ENCODE measurements at regions of chr11 and their contacts with region 1.

Region 1: GRCh38 chr11:112113539-112114457 is 27.1 kb downstream of the SDHD start:
- DNase-seq: no peak
- ATAC-seq: peak; percentile 73
- H3K4me3 Mint-ChIP-seq: no peak overlapping the region
- H3K27ac Mint-ChIP-seq: no peak overlapping the region
- H3K4me1 Mint-ChIP-seq: peaks cover 11% of the 10 kb centered on the region
- H3K27me3 Mint-ChIP-seq: no peaks in the 10 kb centered on the region
- CTCF ChIP-seq: peak; percentile 86

Region 2: DNA sequence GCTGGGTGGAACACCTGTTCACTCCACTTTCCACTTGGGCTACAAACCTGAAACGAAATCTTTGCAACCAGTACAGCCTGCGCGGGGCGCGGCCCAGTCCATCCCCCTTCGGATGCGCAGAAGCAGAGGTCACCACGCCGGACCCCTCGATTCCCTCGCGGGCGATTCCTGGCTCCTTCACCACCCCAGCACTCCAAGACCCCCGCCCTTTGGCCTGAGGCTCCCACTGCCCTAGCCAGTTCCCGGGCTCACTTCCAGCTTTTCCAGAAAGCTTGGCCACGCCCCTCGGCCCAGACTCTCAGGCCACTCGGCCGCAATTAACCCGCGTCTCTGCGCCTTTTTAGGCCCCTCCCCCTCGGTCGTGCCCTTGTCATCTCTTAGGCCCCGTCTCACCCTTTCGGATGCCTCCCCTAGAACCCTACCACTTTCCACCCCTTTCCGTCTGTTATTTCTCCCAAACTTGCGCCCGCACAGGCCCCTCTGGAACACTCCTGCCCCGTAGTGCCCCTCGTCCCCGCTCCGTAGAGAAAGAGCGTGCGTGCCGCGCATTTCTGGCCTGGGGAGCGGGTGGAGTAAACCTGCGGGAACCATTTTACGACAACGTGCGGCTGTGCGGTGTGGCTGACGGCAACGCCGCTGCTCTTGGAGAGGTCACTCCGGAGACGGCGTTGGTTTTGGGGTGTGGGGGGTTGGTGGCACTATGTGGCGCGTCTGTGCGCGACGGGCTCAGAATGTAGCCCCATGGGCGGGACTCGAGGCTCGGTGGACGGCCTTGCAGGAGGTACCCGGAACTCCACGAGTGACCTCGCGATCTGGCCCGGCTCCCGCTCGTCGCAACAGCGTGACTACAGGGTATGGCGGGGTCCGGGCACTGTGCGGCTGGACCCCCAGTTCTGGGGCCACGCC is 88.8 kb before region 1 on chr11 and contains the start of gene DLAT:
- CTCF ChIA-PET with region 1: no interaction called
- POLR2A ChIA-PET with region 1: no interaction called
- intact Hi-C with region 1: no loop called
- DNase-seq: peak; percentile 91
- ATAC-seq: peak; percentile 90
- H3K4me3 Mint-ChIP-seq: peak within 1 kb of the TSS; percentile 99
- H3K27ac Mint-ChIP-seq: peak within 1 kb of the TSS; percentile 100
- H3K4me1 Mint-ChIP-seq: peaks cover 27% of the 10 kb centered on the region
- H3K27me3 Mint-ChIP-seq: no peaks in the 10 kb centered on the region
- CTCF ChIP-seq: no peak
- total RNA-seq, gene DLAT: 50.3 to 51.4 TPM

Region 3: GRCh38 chr11:112100462-112100861 is 13.3 kb before region 1 on chr11:
- CTCF ChIA-PET with region 1: interaction called, 34 read pairs
- POLR2A ChIA-PET with region 1: no interaction called
- intact Hi-C with region 1: no loop called
- DNase-seq: no peak
- ATAC-seq: no peak
- H3K4me3 Mint-ChIP-seq: no peak overlapping the region
- H3K27ac Mint-ChIP-seq: no peak overlapping the region
- H3K4me1 Mint-ChIP-seq: no peaks in the 10 kb centered on the region
- H3K27me3 Mint-ChIP-seq: no peaks in the 10 kb centered on the region
- CTCF ChIP-seq: no peak

Region 4: DNA sequence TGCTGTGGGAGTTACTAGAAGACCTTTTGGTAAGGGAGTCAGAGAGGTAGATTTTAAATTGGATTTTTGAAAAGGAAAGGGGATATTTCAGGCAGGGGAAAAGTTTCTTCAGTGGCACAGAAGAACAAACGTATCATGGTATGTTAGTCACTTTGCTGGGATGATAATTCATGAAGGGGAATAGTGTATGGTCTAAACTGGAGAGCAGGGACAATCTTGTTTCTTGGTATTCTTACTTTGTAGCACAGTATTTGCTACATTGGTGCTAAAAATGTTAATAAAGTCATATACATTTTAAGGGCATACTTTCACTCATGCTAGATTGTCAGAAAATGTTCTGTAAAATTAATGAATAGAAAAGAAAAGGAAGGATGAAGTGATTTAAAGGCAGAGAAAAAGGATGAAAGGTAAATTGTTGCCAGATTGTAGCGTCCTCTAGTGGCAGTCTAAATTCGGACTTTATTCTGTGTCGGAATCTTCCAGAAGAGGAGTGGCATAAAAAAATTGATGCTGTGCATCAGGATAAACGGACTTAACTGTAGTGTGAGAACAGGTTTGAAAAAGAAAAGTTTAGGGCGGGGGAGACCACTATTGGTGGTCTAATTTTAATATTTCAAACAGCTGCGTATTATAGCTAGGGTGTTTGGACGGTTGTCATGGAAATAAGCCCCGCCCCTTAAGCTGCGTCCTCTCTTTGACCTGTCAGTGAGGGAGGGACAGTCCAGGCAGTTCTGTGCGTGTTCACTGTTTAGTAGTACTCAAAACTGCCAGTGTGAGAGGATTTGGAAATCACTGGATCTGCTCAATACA is 61.2 kb after region 1 on chr11 and contains the start of gene BCO2:
- CTCF ChIA-PET with region 1: interaction called, 29 read pairs
- POLR2A ChIA-PET with region 1: no interaction called
- intact Hi-C with region 1: loop called (anchors 5 kb)
- DNase-seq: peak; percentile 72
- ATAC-seq: peak; percentile 89
- H3K4me3 Mint-ChIP-seq: peak within 1 kb of the TSS; percentile 51
- H3K27ac Mint-ChIP-seq: no peak within 1 kb of the TSS
- H3K4me1 Mint-ChIP-seq: peaks cover 9% of the 10 kb centered on the region
- H3K27me3 Mint-ChIP-seq: peaks cover 22% of the 10 kb centered on the region
- CTCF ChIP-seq: peak; percentile 93
- total RNA-seq, gene BCO2: 0.97 to 1.4 TPM

Region 5: DNA sequence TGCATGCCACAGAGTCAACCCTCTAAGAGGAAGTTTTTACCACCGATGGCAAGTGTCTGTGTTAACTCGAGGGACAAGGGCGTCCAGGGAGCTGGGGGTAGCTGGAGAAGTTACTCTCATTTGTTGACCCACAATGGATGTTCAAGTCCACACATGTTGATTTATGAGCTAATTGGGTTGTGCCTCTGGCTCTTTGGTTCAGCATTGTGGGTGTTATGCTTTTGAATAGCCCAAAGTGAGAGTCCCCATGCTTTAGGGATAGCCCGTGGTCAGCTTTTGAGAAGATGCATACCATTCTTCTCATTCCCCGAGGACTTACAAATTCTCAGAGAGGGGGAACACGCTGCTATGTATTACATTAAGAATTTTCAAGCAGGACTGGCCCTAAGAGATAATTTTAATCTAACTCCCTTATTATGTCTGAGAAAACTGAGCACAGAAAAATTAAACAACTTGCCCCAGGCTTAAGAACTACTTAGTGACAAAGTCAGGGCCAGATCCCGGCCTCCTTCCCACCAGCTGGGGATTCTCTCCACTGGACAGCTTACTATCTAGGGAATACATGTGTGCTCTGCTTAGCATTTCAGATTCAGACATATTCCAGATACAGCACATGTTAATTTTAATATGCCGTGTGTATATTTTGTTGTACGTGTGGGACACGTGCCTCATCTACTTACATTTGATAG is 152.1 kb after region 1 on chr11:
- CTCF ChIA-PET with region 1: no interaction called
- POLR2A ChIA-PET with region 1: no interaction called
- intact Hi-C with region 1: no loop called
- DNase-seq: no peak
- ATAC-seq: no peak
- H3K4me3 Mint-ChIP-seq: no peak overlapping the region
- H3K27ac Mint-ChIP-seq: no peak overlapping the region
- H3K4me1 Mint-ChIP-seq: no peaks in the 10 kb centered on the region
- H3K27me3 Mint-ChIP-seq: no peaks in the 10 kb centered on the region
- CTCF ChIP-seq: no peak

Region 6: DNA sequence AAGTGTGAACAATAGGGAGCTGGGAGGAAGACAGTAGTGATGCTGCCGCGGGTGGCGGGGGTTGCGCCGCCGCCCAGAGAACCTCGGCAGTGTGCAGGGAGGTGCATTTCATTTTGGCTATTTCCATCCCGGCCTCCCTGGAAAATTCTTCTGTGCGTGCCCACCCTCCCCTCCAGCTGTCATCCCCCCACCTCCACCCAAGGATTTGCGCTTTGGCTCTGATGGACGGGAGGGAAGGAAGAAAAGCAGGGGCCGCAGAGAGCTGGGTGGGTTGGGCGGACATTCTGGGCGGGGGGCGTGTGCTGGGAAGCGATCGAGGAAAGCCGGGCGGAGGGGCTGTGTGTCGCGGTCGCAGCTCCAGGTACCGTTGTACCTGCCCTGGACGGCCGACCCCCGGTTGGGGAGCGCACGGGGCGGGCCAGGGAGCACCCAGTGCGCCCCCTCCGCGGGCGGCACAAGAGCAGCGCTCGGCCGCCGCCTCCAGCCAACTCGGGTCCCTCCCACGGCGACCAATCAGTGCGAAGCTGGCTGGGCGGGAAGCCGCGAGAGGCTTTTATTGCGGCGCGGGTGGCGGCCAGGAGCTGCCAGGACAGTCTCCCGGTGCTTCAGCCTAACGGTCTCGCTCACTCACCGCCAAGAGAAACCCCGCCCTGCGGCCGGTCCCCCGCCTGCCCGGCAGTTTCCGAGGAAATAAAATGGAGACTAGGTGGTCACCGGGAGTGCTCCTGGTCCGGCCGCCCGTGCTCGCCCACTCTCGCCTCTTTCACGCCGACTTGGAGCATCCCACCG is 849.0 kb after region 1 on chr11:
- CTCF ChIA-PET with region 1: no interaction called
- POLR2A ChIA-PET with region 1: no interaction called
- intact Hi-C with region 1: no loop called
- DNase-seq: no peak
- ATAC-seq: no peak
- H3K4me3 Mint-ChIP-seq: peak overlapping the region; percentile 68
- H3K27ac Mint-ChIP-seq: no peak overlapping the region
- H3K4me1 Mint-ChIP-seq: peaks cover 12% of the 10 kb centered on the region
- H3K27me3 Mint-ChIP-seq: peaks cover 50% of the 10 kb centered on the region
- CTCF ChIP-seq: no peak

Measured in activated CD8-positive, alpha-beta T cell treated with anti-CD3 and anti-CD28 coated beads for 36 hours (primary cell).